Activated B cell treated with CpG ODN at 0.5 μM for 24 hours (primary cell): ENCODE measurements at regions of chr10 and their contacts with region 1.

Region 1: GRCh38 chr10:133394064-133394663 is at the start of gene MTG1:
- DNase-seq: peak; percentile 99
- ATAC-seq: peak; percentile 65
- H3K4me3 Mint-ChIP-seq: peak within 1 kb of the TSS; percentile 88
- H3K27ac Mint-ChIP-seq: peak within 1 kb of the TSS; percentile 81
- H3K4me1 Mint-ChIP-seq: peaks cover 62% of the 10 kb centered on the region
- H3K27me3 Mint-ChIP-seq: no peaks in the 10 kb centered on the region
- CTCF ChIP-seq: no peak
- total RNA-seq, gene MTG1: 67.6 and 83.1 TPM in 2 replicates

Region 2: DNA sequence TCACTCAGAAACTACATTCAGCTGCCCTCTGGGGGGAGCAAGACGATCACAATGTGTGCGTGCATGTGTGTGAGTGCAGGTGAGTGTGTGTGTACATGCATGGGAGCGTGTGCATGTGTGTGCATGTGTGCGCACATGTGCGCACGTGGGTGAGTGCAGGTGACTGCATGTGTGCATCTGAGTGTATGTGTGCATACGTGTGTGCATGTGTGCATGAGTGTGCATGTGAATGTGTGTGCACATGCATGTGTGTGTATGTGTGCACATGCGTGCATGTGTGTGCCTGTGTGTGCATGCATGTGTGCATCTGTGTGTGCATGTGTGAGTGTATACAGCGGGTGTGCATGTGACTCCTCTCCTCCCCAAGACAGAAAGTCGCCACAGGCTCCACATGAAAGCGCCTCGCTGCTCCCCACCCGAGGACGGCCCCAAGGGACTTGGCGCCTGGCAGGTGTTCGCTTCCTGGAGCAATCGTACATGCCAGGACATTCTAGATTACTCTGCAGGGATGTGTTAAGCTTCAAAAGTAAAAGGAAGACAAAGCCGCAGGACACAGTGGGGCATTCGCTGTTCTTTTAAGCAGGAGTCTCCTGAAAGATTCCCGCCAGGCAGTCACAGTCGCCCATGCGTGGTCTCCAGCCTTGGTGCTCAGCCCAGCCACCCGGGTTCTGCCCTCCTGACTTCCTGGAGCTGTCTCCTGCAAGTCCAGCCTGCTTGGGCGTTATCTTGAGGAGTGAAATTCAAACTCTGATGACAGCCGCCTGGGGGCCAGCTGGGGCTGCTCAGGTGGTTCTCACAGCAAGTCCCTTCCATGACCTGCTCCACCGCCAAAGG is 348.4 kb before region 1 on chr10:
- CTCF ChIA-PET with region 1: no interaction called
- POLR2A ChIA-PET with region 1: no interaction called
- intact Hi-C with region 1: no loop called
- DNase-seq: no peak
- ATAC-seq: no peak
- H3K4me3 Mint-ChIP-seq: no peak overlapping the region
- H3K27ac Mint-ChIP-seq: no peak overlapping the region
- H3K4me1 Mint-ChIP-seq: no peaks in the 10 kb centered on the region
- H3K27me3 Mint-ChIP-seq: no peaks in the 10 kb centered on the region
- CTCF ChIP-seq: no peak

Region 3: DNA sequence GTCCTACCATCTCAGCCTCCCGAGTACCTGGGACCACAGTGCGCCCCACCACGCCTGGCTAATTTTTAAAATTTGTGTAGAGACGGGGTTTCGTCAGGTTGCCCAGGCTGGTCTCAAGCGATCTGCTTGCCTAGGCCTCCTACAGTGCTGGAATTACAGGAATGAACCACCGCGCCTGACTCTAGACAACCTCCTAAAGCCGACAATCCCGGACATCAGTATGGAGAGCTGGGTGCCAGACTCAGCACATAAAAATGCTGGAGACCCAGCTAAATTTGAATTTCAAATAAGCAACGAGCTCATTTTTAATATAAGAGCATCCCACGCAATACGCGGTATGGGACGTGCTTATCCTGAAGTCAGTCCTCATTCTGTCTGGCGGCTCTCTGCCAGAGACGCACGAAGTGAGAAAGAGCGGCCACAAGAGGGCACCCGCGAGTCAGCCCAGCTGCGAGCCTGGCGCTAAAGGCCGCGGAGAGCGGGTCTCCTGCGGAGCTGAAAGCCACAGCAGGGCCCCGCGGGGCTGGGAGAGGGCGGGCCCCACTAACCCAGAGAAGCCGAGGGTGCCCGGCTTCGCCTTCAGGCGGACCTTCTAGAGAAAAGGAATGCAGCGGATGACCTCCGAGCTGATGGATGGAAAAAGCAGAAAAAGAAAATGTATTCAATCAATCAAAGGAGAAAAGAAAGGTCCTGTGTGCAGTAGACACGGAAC is 64.5 kb before region 1 on chr10:
- CTCF ChIA-PET with region 1: interaction called, 11 read pairs
- POLR2A ChIA-PET with region 1: interaction called, 3 read pairs
- intact Hi-C with region 1: loop called (anchors 1 kb)
- DNase-seq: peak; percentile 84
- ATAC-seq: peak; percentile 90
- H3K4me3 Mint-ChIP-seq: peak overlapping the region; percentile 41
- H3K27ac Mint-ChIP-seq: no peak overlapping the region
- H3K4me1 Mint-ChIP-seq: peaks cover 18% of the 10 kb centered on the region
- H3K27me3 Mint-ChIP-seq: peaks cover 39% of the 10 kb centered on the region
- CTCF ChIP-seq: peak; percentile 69

Region 4: DNA sequence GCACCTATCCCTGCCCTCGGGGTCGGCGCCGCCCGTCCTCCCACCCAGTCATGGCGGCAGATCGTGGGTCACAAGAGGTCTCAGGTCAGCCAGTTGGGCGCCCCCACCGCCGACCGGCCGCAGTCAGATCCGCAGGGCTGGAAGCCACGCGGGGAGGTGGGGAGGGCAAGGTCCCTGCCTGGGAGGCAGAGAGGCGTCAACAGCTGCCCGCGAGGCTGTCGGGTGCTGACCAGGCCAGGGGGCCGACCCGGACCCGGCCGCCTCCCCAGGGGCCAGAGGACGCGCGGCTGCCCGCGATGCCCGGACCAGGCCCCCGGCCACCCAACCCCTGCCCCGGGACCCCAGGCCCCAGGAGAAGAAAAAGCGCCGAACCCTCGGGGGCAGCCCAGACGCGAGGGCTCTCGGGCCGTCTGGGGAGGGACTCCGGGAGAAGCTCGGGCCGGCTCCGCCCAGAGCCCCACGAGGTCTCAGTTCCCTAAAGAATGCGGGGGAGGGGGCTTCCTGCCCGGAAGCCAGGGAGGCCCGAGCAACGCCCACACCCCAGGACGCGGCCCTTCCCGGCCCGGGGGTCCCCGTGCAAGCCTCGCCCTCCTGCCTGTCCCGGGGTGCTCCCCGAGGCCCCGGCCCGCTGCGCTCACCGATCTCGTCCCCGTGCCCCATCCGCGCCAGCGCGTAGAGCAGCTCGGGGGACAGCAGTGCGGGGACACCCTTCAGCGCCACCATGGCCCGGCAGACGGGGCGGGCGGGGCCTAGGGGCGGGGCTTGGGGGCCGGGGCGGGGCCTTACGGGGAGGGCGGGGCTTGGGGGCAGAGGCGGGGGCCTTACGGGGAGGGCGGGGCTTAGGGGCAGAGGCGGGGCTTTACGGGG is 36.6 kb before region 1 on chr10 and contains the start of gene FUOM:
- CTCF ChIA-PET with region 1: no interaction called
- POLR2A ChIA-PET with region 1: interaction called, 17 read pairs
- intact Hi-C with region 1: loop called (anchors 1 kb)
- DNase-seq: peak; percentile 82
- ATAC-seq: peak; percentile 87
- H3K4me3 Mint-ChIP-seq: peak within 1 kb of the TSS; percentile 80
- H3K27ac Mint-ChIP-seq: peak within 1 kb of the TSS; percentile 69
- H3K4me1 Mint-ChIP-seq: peaks cover 31% of the 10 kb centered on the region
- H3K27me3 Mint-ChIP-seq: no peaks in the 10 kb centered on the region
- CTCF ChIP-seq: no peak
- total RNA-seq, gene FUOM: 37.2 and 39.1 TPM in 2 replicates

Region 5: GRCh38 chr10:133378251-133379096 is 15.7 kb before region 1 on chr10:
- CTCF ChIA-PET with region 1: interaction called, 3 read pairs
- POLR2A ChIA-PET with region 1: interaction called, 52 read pairs
- intact Hi-C with region 1: loop called (anchors 1 kb)
- DNase-seq: peak; percentile 70
- ATAC-seq: peak; percentile 48
- H3K4me3 Mint-ChIP-seq: peak overlapping the region; percentile 87
- H3K27ac Mint-ChIP-seq: peak overlapping the region; percentile 61
- H3K4me1 Mint-ChIP-seq: peaks cover 45% of the 10 kb centered on the region
- H3K27me3 Mint-ChIP-seq: no peaks in the 10 kb centered on the region
- CTCF ChIP-seq: no peak

Region 6: GRCh38 chr10:133520155-133520738 is 126.1 kb after region 1 on chr10:
- CTCF ChIA-PET with region 1: no interaction called
- POLR2A ChIA-PET with region 1: no interaction called
- intact Hi-C with region 1: loop called (anchors 2 kb)
- DNase-seq: peak; percentile 90
- ATAC-seq: peak; percentile 99
- H3K4me3 Mint-ChIP-seq: peak overlapping the region; percentile 73
- H3K27ac Mint-ChIP-seq: peak overlapping the region; percentile 50
- H3K4me1 Mint-ChIP-seq: peaks cover 10% of the 10 kb centered on the region
- H3K27me3 Mint-ChIP-seq: peaks cover 16% of the 10 kb centered on the region
- CTCF ChIP-seq: peak; percentile 73